Activated CD8-positive, alpha-beta T cell treated with anti-CD3 and anti-CD28 coated beads for 36 hours (primary cell): ENCODE measurements at regions of chr12 and their contacts with region 1.

Region 1: GRCh38 chr12:109804820-109805761 is 28.1 kb downstream of the TRPV4 start:
- DNase-seq: peak; percentile 74
- ATAC-seq: peak; percentile 93
- H3K4me3 Mint-ChIP-seq: no peak overlapping the region
- H3K27ac Mint-ChIP-seq: no peak overlapping the region
- H3K4me1 Mint-ChIP-seq: no peaks in the 10 kb centered on the region
- H3K27me3 Mint-ChIP-seq: no peaks in the 10 kb centered on the region
- CTCF ChIP-seq: peak; percentile 97

Region 2: GRCh38 chr12:109828236-109828550 is 23.1 kb after region 1 on chr12:
- CTCF ChIA-PET with region 1: interaction called, 21 read pairs
- POLR2A ChIA-PET with region 1: no interaction called
- intact Hi-C with region 1: no loop called
- DNase-seq: no peak
- ATAC-seq: no peak
- H3K4me3 Mint-ChIP-seq: no peak overlapping the region
- H3K27ac Mint-ChIP-seq: no peak overlapping the region
- H3K4me1 Mint-ChIP-seq: no peaks in the 10 kb centered on the region
- H3K27me3 Mint-ChIP-seq: peaks cover 14% of the 10 kb centered on the region
- CTCF ChIP-seq: no peak

Region 3: DNA sequence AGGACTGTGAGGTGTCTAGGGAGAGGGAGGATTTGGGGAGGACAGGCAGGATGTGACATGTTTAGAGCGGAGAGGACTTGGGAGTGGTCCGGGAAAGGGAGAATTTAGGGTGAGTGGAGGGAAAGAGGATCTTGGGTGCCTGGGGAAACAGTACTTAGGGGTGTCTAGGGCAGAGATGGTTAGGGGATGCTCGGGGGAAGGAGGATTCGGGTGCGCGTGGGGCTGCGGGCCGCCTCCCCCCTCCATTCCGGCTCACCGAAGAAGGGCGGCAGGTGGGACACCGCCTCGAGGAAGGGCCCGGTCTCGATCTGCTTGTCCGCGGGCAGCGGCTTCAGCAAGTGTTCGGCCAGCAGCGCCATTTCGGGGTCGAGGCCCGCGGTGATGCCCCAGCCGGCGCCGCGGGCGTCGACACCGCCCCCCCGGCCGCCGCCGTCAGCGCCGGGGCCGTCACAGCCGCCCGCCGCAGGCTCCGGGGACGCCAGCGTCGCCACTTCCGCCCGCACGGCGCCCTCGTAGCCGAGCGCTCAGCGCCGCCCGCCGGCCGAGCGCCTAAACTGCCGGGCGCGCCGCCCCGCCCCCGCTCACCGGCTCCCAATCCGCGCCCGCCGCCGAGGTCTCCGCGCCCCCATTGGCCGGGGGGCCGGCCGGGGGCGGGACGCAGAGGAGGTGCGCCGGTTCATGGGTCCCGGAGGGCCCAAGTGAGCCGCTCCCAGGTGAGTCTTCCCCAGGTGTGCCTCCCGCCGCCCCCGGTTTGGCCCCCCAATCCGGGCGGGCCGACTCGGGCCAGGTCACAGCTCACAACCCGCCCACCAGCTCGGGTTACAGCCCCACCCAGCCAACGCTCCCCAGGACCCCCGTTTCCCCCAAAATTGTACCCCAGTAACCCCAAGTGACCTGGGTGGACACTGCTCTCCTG is 75.2 kb after region 1 on chr12 and contains the start of gene GLTP:
- CTCF ChIA-PET with region 1: interaction called, 18 read pairs
- POLR2A ChIA-PET with region 1: no interaction called
- intact Hi-C with region 1: loop called (anchors 2 kb)
- DNase-seq: peak; percentile 85
- ATAC-seq: peak; percentile 98
- H3K4me3 Mint-ChIP-seq: peak within 1 kb of the TSS; percentile 96
- H3K27ac Mint-ChIP-seq: peak within 1 kb of the TSS; percentile 87
- H3K4me1 Mint-ChIP-seq: peaks cover 33% of the 10 kb centered on the region
- H3K27me3 Mint-ChIP-seq: no peaks in the 10 kb centered on the region
- CTCF ChIP-seq: peak; percentile 34
- total RNA-seq, gene GLTP: 19.9 to 21.2 TPM

Region 4: DNA sequence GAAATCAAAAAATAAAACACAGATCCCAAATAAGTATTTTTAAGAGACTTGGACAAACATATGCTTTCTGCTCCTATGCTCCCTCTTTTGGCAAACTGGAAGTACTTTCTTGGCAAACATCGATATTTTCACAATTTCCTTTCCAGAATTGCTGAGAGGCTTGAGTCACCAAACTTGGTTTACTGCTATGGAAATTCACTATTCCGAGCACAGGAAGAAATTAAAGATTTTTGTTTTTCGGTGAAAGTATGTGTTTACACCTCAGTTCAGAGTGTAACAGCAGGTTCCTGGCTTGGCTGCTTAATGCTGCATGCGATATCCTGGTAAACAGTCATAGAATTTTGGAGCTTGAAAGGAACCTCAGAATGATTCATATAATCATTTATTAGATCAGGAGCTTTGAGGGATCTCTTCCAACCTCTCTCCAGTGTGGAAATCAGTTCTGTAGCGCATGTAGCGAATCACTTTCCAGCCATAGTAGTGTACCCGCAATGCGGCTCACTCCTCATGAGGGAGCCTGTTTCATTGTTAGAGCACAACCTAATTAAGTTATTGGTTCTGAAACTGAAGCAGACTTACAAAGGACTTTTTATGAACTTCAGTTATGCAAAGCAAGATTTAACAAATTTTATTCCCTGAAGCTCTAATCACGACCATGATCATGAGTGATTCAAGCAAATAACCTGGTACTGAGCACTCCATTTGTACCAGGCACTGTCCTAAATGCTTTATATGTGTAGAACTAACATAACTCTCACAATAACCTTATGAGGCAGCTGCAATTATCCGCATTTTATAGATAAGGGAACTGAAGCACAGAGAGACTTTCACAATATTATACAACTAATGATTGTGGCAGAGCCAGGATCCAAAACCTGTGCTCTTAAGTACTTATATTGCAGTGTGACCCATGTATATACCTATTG is 419.6 kb after region 1 on chr12:
- CTCF ChIA-PET with region 1: no interaction called
- POLR2A ChIA-PET with region 1: no interaction called
- intact Hi-C with region 1: no loop called
- DNase-seq: no peak
- ATAC-seq: no peak
- H3K4me3 Mint-ChIP-seq: no peak overlapping the region
- H3K27ac Mint-ChIP-seq: no peak overlapping the region
- H3K4me1 Mint-ChIP-seq: no peaks in the 10 kb centered on the region
- H3K27me3 Mint-ChIP-seq: no peaks in the 10 kb centered on the region
- CTCF ChIP-seq: peak; percentile 18